HEK293 (cell line): ENCODE measurements at regions of chr22 and their contacts with region 1.

Region 1: DNA sequence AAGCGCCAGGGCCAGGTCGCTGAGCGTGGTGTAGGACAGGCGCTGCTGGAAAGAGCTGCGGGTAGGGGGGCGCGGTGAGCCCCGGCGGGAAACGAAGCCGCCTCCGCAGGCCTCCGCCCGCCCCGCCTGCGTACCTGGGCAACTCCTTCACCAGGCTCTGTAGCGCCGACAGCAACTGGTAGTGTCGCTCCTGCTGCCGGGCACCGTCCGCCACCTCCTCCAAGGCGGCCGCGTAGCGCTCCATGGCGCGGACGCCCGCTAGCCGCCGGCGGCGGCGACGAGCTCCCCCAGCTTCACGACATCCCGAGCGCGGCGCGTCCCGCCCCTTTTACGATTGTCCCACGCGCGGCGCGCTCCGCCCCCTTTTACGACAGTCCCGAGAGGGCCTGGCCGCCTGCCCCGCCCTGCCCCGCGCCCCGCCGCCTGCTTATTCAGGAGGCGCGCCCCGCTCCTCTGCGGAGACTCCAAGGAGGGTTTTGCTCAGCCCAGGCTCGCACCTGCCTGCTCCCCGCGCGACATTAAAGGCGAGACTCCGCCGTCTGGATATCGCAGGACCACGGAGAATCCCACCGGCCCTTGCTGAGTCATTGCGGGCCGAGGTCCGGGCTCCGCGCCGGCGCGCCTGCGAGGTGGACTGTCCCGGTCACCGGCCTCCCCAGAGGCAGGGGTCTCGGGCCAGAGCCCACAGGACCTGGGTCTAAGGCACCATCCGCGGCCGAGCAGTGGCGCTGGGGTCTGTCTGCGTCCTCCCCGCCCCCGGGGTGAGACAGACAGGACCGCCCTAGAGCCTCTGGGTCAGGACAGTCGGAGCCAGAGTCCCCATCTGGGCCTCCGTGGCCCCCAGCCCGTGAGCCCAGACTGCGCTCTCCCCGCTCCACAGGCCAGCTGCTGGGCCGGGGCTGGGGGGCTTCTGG is at the start of gene DGCR6L:
- H3K4me3 ChIP-seq: peak within 1 kb of the TSS; percentile 96
- H3K27ac ChIP-seq: peak within 1 kb of the TSS; percentile 89
- H3K4me1 ChIP-seq: peaks cover 4% of the 10 kb centered on the region; the same call in 1 of the 2 replicates
- CTCF ChIP-seq: no peak

Region 2: DNA sequence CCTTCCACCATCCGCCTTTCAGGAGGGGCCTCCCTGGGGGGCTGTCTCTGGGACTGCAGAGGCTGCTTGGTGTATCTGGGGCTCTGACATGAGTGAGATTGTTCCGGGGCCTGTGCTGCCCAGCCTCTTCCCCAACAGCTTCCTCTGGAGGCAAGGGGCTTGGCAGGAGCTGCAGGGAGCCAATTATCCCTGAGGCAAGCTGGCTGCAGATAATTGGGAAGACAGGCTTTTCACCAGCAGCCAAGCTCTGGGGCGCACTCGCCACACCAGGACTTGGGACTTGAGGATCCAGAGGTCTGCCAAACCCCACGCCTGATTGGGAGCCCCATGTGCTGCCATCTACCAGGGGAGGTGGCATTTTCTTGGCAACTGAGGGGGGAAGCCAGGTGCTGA is 36.3 kb before region 1 on chr22:
- CTCF ChIA-PET with region 1: no interaction called
- POLR2A ChIA-PET with region 1: no interaction called
- H3K4me3 ChIP-seq: no peak overlapping the region
- H3K27ac ChIP-seq: no peak overlapping the region
- H3K4me1 ChIP-seq: no peaks in the 10 kb centered on the region
- CTCF ChIP-seq: no peak

Region 3: GRCh38 chr22:20305931-20306645 is 13.9 kb before region 1 on chr22:
- CTCF ChIA-PET with region 1: interaction called, 13 read pairs
- POLR2A ChIA-PET with region 1: interaction called, 3 read pairs
- H3K4me3 ChIP-seq: no peak overlapping the region
- H3K27ac ChIP-seq: no peak overlapping the region
- H3K4me1 ChIP-seq: no peaks in the 10 kb centered on the region
- CTCF ChIP-seq: no peak

Region 4: DNA sequence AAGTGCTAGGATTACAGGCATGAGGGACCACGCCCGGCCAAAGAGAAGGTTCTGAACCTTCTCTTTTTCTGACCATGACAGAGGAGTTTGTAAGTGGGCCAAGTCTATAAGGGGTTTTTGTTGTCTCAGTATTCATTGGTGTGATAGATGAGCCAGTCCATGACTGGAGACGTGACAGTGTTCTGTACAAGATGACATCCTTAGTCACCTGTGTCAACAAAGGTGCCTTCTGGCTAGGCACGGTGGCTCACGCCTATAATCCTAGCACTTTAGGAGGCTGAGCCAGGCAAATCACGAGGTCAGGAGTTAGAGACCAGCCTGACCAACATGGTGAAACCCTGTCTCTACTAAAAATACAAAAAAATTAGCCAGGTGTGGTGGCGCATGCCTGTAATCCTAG is 179.8 kb after region 1 on chr22:
- CTCF ChIA-PET with region 1: no interaction called
- POLR2A ChIA-PET with region 1: no interaction called
- H3K4me3 ChIP-seq: no peak overlapping the region
- H3K27ac ChIP-seq: no peak overlapping the region
- H3K4me1 ChIP-seq: peaks cover 3% of the 10 kb centered on the region; the same call in 1 of the 2 replicates
- CTCF ChIP-seq: no peak